Right lobe of liver (tissue), 6 donors: ENCODE measurements at regions of chr17 and their contacts with region 1.

Region 1: GRCh38 chr17:67376737-67377487 is at the start of gene PITPNC1:
- DNase-seq: peak; percentile 93 to 95 (median 93)
- ATAC-seq: peak; percentile 76 to 89 (median 80)
- H3K4me3 ChIP-seq: peak within 1 kb of the TSS; percentile 50 to 69 (median 63)
- H3K27ac ChIP-seq: peak within 1 kb of the TSS; percentile 92 to 94 (median 94)
- H3K4me1 ChIP-seq: peaks cover 0 to 12% (median 4%) of the 10 kb centered on the region in 4 donors
- H3K27me3 ChIP-seq: no peaks in the 10 kb centered on the region
- CTCF ChIP-seq: peak in 3 of 4 donors; percentile 19 to 26 (median 22)
- POLR2A ChIP-seq: peak; percentile 95
- total RNA-seq, gene PITPNC1: 4.7 to 13.0 (median 7.4) TPM

Region 2: DNA sequence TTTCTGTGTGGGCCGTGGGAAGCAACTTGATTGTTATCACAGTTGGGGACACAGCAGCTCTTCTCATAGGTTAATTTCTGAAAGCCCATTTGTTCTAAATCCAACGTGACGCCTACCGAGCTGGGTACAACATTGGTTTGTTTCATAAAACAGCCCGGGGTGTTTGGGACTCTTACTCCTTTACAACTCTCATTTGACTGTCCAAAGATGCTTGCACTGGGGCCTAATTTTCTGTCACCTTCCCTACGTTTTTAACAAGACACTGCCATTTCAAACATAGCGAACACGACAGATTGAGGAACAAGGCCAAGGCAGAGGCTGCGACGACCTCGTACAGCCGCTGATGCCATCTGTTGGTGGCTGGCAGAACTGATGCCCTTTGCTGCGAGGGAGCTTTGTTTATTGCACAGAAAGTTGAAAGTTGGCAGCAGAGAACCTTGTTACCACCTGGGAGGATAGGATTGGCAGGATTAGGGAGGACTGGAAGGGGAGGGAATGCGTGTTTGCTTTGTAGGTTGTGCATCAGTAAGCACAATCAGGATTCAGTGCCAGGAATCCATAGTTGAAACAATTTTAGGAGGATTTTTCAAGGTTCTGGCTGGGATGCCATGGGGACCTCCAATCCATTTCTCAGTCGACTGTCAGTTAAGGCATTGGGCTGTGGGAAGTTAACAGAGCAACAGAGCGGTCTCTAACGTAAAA is 98.5 kb after region 1 on chr17:
- intact Hi-C with region 1: loop called (anchors 5 kb)
- DNase-seq: peak; percentile 76 to 85 (median 83)
- ATAC-seq: peak; percentile 95 to 99 (median 97)
- H3K4me3 ChIP-seq: no peak overlapping the region
- H3K27ac ChIP-seq: no peak overlapping the region
- H3K4me1 ChIP-seq: no peaks in the 10 kb centered on the region
- H3K27me3 ChIP-seq: no peaks in the 10 kb centered on the region
- CTCF ChIP-seq: peak; percentile 89 to 97 (median 92)
- POLR2A ChIP-seq: no peak

Region 3: GRCh38 chr17:67689534-67690177 is 312.7 kb after region 1 on chr17:
- intact Hi-C with region 1: loop called in 1 of 2 experiments (anchors 10 kb)
- DNase-seq: peak in 1 of 3 donors; percentile 51
- ATAC-seq: peak; percentile 75 to 88 (median 81)
- H3K4me3 ChIP-seq: no peak overlapping the region
- H3K27ac ChIP-seq: no peak overlapping the region
- H3K4me1 ChIP-seq: no peaks in the 10 kb centered on the region
- H3K27me3 ChIP-seq: no peaks in the 10 kb centered on the region
- CTCF ChIP-seq: peak; percentile 76 to 85 (median 82)
- POLR2A ChIP-seq: no peak